B cell (primary cell): ENCODE measurements at regions of chr12 and their contacts with region 1.

Region 1: GRCh38 chr12:68610370-68611093 is at the start of gene RAP1B:
- DNase-seq: peak; percentile 93
- ATAC-seq: peak; percentile 86
- H3K4me3 ChIP-seq: peak within 1 kb of the TSS; percentile 61 to 99 (median 90)
- H3K4me3 Mint-ChIP-seq: peak within 1 kb of the TSS; percentile 98
- H3K27ac ChIP-seq: peak within 1 kb of the TSS; percentile 91 to 94
- H3K27ac Mint-ChIP-seq: peak within 1 kb of the TSS; percentile 99
- H3K4me1 ChIP-seq: peaks cover 35 to 40% of the 10 kb centered on the region in 2 donors
- H3K4me1 Mint-ChIP-seq: peaks cover 45% of the 10 kb centered on the region
- H3K27me3 ChIP-seq: no peaks in the 10 kb centered on the region
- H3K27me3 Mint-ChIP-seq: no peaks in the 10 kb centered on the region
- CTCF ChIP-seq: no peak
- total RNA-seq, gene RAP1B: 158 and 159 TPM in 2 replicates

Region 2: DNA sequence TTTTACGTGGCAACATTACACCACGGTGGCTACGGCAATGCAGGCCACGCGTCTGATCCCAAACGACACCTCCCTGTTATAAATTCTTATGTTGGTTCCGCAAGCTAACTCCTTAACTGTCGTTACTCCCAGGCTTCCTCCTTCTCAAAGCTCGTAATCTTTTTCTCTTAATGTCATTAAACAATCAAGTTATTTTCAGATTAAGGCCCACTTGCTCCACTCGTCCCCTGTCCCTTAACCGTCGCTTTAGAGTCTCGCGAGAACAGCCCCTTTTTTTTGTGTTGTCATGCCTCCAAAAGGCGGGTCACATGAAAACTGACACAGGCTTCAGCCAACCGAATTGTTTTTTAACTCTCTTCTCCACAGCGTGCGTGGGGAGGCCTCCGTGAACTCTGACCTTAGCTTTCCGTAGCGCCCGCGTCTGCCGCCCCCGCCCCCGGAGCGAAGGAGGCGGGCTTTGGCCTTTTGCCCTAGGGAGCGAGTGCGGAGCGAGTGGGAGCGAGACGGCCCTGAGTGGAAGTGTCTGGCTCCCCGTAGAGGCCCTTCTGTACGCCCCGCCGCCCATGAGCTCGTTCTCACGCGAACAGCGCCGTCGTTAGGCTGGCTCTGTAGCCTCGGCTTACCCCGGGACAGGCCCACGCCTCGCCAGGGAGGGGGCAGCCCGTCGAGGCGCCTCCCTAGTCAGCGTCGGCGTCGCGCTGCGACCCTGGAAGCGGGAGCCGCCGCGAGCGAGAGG is 1341.5 kb before region 1 on chr12 and contains the start of gene CAND1:
- CTCF ChIA-PET with region 1: no interaction called
- POLR2A ChIA-PET with region 1: no interaction called
- intact Hi-C with region 1: loop called (anchors 1 kb)
- DNase-seq: peak; percentile 99
- ATAC-seq: peak; percentile 78
- H3K4me3 ChIP-seq: peak within 1 kb of the TSS; percentile 67 to 94 (median 80)
- H3K4me3 Mint-ChIP-seq: peak within 1 kb of the TSS; percentile 86
- H3K27ac ChIP-seq: peak within 1 kb of the TSS; percentile 90 to 94
- H3K27ac Mint-ChIP-seq: peak within 1 kb of the TSS; percentile 91
- H3K4me1 ChIP-seq: peaks cover 24 to 25% of the 10 kb centered on the region in 2 donors
- H3K4me1 Mint-ChIP-seq: peaks cover 34% of the 10 kb centered on the region
- H3K27me3 ChIP-seq: no peaks in the 10 kb centered on the region
- H3K27me3 Mint-ChIP-seq: no peaks in the 10 kb centered on the region
- CTCF ChIP-seq: no peak
- total RNA-seq, gene CAND1: 108 and 110 TPM in 2 replicates

Region 3: DNA sequence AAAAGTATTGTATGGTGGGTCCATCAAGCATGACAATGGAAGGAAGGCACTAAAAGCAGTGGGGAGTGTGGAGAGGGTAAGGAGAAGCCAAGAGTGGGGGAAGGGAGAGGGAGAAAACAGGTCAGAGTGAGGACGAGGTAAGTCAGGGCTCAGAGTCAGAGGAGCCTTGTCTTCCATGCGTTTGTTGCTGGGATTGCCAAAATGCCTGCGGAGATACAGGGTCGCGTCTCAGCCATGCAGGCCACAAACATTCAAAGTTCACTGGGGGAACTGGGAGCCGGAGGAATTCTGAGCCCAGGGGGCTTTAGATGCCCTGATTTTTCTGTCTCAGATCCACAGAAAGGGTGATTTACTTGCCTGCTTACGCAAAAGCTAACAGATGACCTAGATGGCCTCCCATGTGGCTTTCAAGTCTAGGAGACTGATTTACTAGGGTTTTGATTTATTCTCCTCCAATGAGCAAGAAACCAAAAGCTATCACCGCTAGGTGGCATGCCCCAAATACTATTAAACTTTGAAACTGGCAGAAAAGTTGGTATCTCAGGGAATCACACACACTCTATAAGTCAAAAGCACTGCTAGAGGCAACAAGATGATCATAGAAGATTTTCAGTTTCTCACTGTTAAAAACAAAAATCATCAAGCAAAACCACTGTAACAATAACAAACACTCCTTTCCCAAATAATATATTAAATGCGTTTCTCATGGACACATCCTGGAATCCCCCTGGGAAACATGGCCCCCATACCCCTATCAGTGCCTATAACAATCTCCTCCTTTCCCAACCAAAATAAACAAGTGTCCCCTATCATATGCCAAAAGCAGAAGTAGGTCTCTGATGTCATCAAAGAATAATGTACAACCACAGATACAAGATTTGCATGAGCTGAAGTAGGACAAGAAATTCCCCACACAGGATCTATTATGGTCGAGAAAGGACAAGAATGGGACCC is 251.7 kb before region 1 on chr12:
- CTCF ChIA-PET with region 1: interaction called, 7 read pairs
- POLR2A ChIA-PET with region 1: interaction called, 7 read pairs
- intact Hi-C with region 1: loop called (anchors 1 kb)
- DNase-seq: peak; percentile 86
- ATAC-seq: peak; percentile 82
- H3K4me3 ChIP-seq: peak overlapping the region in 1 of 5 experiments; percentile 5
- H3K4me3 Mint-ChIP-seq: peak overlapping the region; percentile 54
- H3K27ac ChIP-seq: peak overlapping the region; percentile 78 to 84
- H3K27ac Mint-ChIP-seq: peak overlapping the region; percentile 86
- H3K4me1 ChIP-seq: peaks cover 21 to 22% of the 10 kb centered on the region in 2 donors
- H3K4me1 Mint-ChIP-seq: peaks cover 23% of the 10 kb centered on the region
- H3K27me3 ChIP-seq: no peaks in the 10 kb centered on the region
- H3K27me3 Mint-ChIP-seq: no peaks in the 10 kb centered on the region
- CTCF ChIP-seq: peak; percentile 73

Region 4: DNA sequence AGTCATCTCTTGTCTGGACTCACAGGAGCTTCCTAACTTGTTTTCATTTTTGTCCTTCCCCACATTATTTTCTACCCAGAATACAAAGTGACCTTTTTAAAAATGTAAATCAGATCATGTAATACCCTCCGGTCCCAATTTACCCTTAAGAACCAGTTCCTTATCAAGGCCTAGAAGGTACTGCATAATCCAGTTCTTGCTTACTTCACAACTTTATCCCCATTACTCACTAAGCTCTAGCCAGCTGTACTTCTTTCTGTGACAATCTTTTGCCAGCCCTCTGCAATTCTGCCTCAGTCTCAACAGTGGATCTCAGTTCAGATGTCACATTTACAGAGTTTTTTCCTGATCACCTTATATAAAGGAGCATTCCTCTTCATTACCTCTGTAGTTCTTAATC is 11.7 kb after region 1 on chr12:
- CTCF ChIA-PET with region 1: interaction called, 3 read pairs
- POLR2A ChIA-PET with region 1: no interaction called
- intact Hi-C with region 1: loop called (anchors 1 kb)
- DNase-seq: no peak
- ATAC-seq: peak; percentile 31
- H3K4me3 ChIP-seq: no peak overlapping the region
- H3K4me3 Mint-ChIP-seq: peak overlapping the region; percentile 53
- H3K27ac ChIP-seq: peak overlapping the region in 1 of 2 donors; percentile 48
- H3K27ac Mint-ChIP-seq: peak overlapping the region; percentile 59
- H3K4me1 ChIP-seq: peaks cover 45 to 60% of the 10 kb centered on the region in 2 donors
- H3K4me1 Mint-ChIP-seq: peaks cover 77% of the 10 kb centered on the region
- H3K27me3 ChIP-seq: no peaks in the 10 kb centered on the region
- H3K27me3 Mint-ChIP-seq: no peaks in the 10 kb centered on the region
- CTCF ChIP-seq: no peak

Region 5: GRCh38 chr12:68686595-68687521 is 76.3 kb after region 1 on chr12 and contains the start of gene NUP107:
- CTCF ChIA-PET with region 1: no interaction called
- POLR2A ChIA-PET with region 1: no interaction called
- intact Hi-C with region 1: loop called (anchors 1 kb)
- DNase-seq: peak; percentile 98
- ATAC-seq: peak; percentile 95
- H3K4me3 ChIP-seq: peak within 1 kb of the TSS; percentile 71 to 100 (median 81)
- H3K4me3 Mint-ChIP-seq: peak within 1 kb of the TSS; percentile 96
- H3K27ac ChIP-seq: peak within 1 kb of the TSS; percentile 70 to 77
- H3K27ac Mint-ChIP-seq: peak within 1 kb of the TSS; percentile 98
- H3K4me1 ChIP-seq: peaks cover 17 to 20% of the 10 kb centered on the region in 2 donors
- H3K4me1 Mint-ChIP-seq: peaks cover 28% of the 10 kb centered on the region
- H3K27me3 ChIP-seq: no peaks in the 10 kb centered on the region
- H3K27me3 Mint-ChIP-seq: no peaks in the 10 kb centered on the region
- CTCF ChIP-seq: no peak
- total RNA-seq, gene NUP107: 77.3 and 88.9 TPM in 2 replicates

Region 6: DNA sequence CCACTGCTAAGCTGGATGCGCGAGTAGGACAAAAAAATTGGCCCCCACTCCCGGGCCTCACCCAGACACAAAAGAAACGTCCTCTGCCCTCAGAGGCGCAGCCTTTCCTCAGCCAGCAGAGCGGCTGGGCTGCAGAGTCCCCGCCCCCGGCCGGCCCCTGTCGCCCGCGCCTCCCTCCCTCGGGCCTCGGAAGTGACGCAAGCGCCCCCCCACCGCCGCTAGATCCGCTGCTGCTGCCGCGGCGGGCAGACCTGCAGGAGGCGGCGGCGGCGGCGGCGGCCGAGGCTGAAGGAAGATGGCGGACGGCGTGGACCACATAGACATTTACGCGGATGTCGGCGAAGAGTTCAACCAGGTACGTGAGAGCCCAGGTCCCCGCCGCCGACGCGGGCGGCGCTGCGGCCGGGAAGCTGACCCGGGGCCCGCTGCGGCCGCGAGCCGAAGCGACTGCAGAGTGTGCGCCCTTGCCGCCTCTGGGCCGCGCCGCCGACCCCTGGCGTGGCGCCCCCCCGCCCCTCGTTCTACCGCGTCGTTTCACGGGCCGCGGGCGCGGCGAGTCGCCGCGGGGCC is 628.9 kb after region 1 on chr12 and contains the start of gene CPSF6:
- CTCF ChIA-PET with region 1: no interaction called
- POLR2A ChIA-PET with region 1: no interaction called
- intact Hi-C with region 1: loop called (anchors 5 kb)
- DNase-seq: peak; percentile 97
- ATAC-seq: peak; percentile 94
- H3K4me3 ChIP-seq: peak within 1 kb of the TSS; percentile 63 to 91 (median 88)
- H3K4me3 Mint-ChIP-seq: peak within 1 kb of the TSS; percentile 93
- H3K27ac ChIP-seq: peak within 1 kb of the TSS; percentile 80 to 88
- H3K27ac Mint-ChIP-seq: peak within 1 kb of the TSS; percentile 98
- H3K4me1 ChIP-seq: peaks cover 33 to 39% of the 10 kb centered on the region in 2 donors
- H3K4me1 Mint-ChIP-seq: peaks cover 48% of the 10 kb centered on the region
- H3K27me3 ChIP-seq: no peaks in the 10 kb centered on the region
- H3K27me3 Mint-ChIP-seq: no peaks in the 10 kb centered on the region
- CTCF ChIP-seq: no peak
- total RNA-seq, gene CPSF6: 108 and 114 TPM in 2 replicates